Activated naive CD4-positive, alpha-beta T cell treated with anti-CD3 and anti-CD28 coated beads for 36 hours (primary cell): ENCODE measurements at regions of chr9 and their contacts with region 1.

Region 1: DNA sequence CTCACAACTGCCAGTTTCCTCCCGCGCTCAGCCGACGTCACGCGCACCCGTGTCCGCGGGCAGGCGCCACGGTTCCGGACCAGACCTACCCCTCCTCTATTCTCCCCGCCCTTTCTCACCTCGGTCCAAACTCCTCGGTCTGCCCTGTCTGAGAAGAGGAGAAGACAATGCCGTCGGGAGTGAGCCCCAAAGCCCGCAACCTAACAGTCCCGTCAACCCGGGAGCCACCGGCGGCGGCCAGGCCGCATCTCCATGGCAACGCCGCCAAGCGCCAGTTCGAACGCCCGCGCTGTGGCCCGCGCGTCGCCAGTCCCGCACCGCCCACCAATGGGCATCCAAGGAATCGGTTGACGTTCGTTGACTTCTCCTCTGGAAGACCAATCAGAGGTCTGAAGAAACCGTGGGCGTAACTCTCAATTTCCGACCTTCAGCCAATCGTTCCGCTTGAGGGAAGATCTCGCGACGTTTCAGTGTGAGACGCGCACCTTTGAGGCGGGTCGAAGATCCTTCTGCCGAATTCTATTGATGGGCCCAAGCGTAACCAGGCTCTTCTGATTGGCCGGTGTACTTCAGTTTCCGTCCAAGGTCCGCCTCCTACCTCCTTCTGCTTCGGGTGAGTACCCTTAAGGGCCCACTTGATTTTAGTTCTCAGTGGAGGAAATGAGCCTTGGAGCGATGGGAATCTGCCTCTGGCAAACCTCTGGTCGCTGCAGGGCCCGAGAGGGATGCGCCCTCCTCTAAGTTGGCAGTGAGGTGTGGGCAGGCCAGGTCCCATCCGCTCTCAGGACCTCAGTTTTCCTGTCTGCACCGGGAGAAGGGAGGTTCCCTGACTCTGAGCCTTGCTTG is at the starts of genes KIF24 and NUDT2:
- DNase-seq: peak; percentile 98
- H3K4me3 Mint-ChIP-seq: peak within 1 kb of the TSS; percentile 88
- H3K27ac Mint-ChIP-seq: peak within 1 kb of the TSS; percentile 94
- H3K4me1 Mint-ChIP-seq: peaks cover 42% of the 10 kb centered on the region
- H3K27me3 Mint-ChIP-seq: no peaks in the 10 kb centered on the region
- total RNA-seq, gene KIF24: 4.2 to 4.5 TPM
- total RNA-seq, gene NUDT2: 39.2 to 42.9 TPM

Region 2: GRCh38 chr9:34048923-34049697 is 280.1 kb before region 1 on chr9:
- CTCF ChIA-PET with region 1: interaction called, 3 read pairs
- intact Hi-C with region 1: loop called (anchors 1 kb)
- DNase-seq: peak; percentile 98
- H3K4me3 Mint-ChIP-seq: peak overlapping the region; percentile 91
- H3K27ac Mint-ChIP-seq: peak overlapping the region; percentile 98
- H3K4me1 Mint-ChIP-seq: peaks cover 33% of the 10 kb centered on the region
- H3K27me3 Mint-ChIP-seq: no peaks in the 10 kb centered on the region

Region 3: GRCh38 chr9:34178520-34179212 is 150.5 kb before region 1 on chr9 and contains the start of gene UBAP1:
- CTCF ChIA-PET with region 1: no interaction called
- intact Hi-C with region 1: loop called (anchors 1 kb)
- DNase-seq: peak; percentile 99
- H3K4me3 Mint-ChIP-seq: peak within 1 kb of the TSS; percentile 84
- H3K27ac Mint-ChIP-seq: peak within 1 kb of the TSS; percentile 94
- H3K4me1 Mint-ChIP-seq: peaks cover 16% of the 10 kb centered on the region
- H3K27me3 Mint-ChIP-seq: no peaks in the 10 kb centered on the region
- total RNA-seq, gene UBAP1: 29.9 to 31.7 TPM

Region 4: GRCh38 chr9:34346873-34347799 is 17.9 kb after region 1 on chr9:
- CTCF ChIA-PET with region 1: no interaction called
- intact Hi-C with region 1: no loop called
- DNase-seq: no peak
- H3K4me3 Mint-ChIP-seq: no peak overlapping the region
- H3K27ac Mint-ChIP-seq: no peak overlapping the region
- H3K4me1 Mint-ChIP-seq: no peaks in the 10 kb centered on the region
- H3K27me3 Mint-ChIP-seq: no peaks in the 10 kb centered on the region

Region 5: DNA sequence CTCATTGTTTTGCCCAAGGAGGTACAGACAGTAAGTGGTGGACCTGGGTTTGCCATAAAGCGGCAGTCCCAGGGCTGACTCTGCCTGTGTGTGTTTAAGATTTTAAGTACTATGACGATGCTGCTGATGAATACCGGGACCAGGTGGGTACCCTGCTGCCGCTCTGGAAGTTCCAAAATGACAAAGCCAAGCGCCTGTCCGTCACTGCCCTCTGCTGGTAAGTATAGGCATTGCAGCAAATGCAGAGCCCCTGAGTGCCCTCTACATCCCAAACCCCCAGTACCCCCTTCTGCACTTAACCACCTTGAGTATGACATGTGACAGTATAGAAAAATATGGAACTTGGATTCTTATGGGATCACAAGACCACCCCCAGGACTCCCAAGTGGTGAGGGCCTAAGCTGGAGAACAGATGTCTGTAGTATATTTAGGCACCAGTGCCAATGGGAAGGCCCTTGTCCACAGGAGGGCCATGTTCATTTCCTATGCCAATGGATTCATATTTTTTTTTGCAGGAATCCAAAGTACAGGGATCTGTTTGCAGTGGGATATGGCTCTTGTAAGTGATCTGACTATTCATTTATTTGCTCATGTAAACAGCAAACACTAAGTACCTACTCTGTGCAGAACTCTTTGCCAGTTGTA is 171.5 kb after region 1 on chr9:
- CTCF ChIA-PET with region 1: interaction called, 3 read pairs
- intact Hi-C with region 1: loop called (anchors 5 kb)
- DNase-seq: peak; percentile 91
- H3K4me3 Mint-ChIP-seq: no peak overlapping the region
- H3K27ac Mint-ChIP-seq: no peak overlapping the region
- H3K4me1 Mint-ChIP-seq: peaks cover 13% of the 10 kb centered on the region
- H3K27me3 Mint-ChIP-seq: peaks cover 7% of the 10 kb centered on the region

Region 6: GRCh38 chr9:34603610-34604231 is 274.5 kb after region 1 on chr9:
- CTCF ChIA-PET with region 1: no interaction called
- intact Hi-C with region 1: loop called (anchors 10 kb)
- DNase-seq: peak; percentile 89
- H3K4me3 Mint-ChIP-seq: no peak overlapping the region
- H3K27ac Mint-ChIP-seq: no peak overlapping the region
- H3K4me1 Mint-ChIP-seq: no peaks in the 10 kb centered on the region
- H3K27me3 Mint-ChIP-seq: no peaks in the 10 kb centered on the region

Region 7: DNA sequence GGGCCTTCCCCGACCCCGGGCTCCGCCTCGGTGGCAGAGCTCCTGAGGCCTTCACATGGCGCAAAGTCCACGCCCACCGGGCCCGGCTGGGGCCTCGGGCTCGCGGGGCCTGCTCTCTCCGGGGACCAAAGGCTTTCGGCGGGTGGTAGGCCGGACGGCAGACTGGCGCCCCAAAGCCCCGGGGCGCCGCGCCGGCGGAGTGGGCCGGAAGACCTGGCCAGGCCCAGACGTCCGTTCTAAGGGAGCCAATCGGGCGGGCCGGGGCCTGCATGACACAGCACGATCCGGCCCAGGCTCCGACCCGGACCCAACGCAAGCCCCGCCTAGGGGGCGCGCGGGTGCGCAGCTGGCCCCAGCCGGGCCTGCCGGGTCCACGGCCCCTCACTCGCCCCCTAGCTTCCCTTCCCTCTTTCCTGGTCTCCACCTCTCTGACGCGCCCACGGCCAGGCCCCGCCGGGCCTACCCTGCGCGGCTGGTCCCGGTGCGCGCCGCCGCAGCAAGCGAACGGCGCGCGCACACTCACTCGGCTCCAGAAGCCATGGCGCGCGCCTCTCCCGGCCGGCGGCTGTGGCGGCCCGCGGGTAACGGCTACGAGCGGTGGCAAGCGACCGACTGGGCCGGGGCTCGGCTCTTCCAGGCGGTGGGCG is 742.7 kb after region 1 on chr9:
- CTCF ChIA-PET with region 1: no interaction called
- intact Hi-C with region 1: loop called (anchors 10 kb)
- DNase-seq: peak; percentile 77
- H3K4me3 Mint-ChIP-seq: peak overlapping the region; percentile 92
- H3K27ac Mint-ChIP-seq: peak overlapping the region; percentile 96
- H3K4me1 Mint-ChIP-seq: peaks cover 57% of the 10 kb centered on the region
- H3K27me3 Mint-ChIP-seq: no peaks in the 10 kb centered on the region